ENCODE measurements at regions of chr15 and their contacts with region 1.

Region 1: DNA sequence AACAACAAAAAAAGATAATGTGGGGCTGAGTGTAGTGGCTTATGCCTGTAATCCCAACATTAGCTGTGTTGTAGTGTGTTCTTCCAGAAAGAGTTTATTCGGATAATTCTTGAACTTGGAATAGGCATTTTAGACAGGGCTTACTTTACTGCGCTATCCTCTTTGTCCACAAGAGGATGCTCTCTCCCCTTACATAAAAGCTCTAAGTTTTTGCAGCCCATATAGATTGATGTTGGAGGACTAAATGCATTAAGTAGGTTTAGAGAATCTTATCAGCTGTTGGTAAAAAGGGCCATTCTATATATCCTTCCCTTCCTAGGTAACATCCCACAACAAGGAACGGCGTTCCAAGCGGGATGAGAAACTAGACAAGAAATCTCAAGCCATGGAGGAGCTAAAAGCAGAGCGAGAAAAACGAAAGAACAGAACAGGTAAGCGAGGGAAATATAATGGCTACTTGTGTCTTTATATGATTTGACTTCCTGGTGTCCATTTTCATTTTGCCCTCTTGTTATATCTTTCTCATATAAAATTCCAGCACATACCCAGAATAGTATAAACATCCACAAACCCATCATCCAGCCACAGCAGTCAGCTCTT is 27.8 kb upstream of the ITPKA start:
- DNase-seq: peak; percentile 74
- ATAC-seq: peak; percentile 91
- H3K4me3 ChIP-seq: no peak overlapping the region
- H3K27ac ChIP-seq: no peak overlapping the region
- H3K4me1 ChIP-seq: peaks cover 4% of the 10 kb centered on the region
- H3K27me3 ChIP-seq: no peaks in the 10 kb centered on the region
- CTCF ChIP-seq: peak; percentile 97
- POLR2A ChIP-seq: 0 out of 2 replicates have a peak, but pooled peaks have one; percentile 25
- RAD21 ChIP-seq: peak; percentile 91

Region 2: DNA sequence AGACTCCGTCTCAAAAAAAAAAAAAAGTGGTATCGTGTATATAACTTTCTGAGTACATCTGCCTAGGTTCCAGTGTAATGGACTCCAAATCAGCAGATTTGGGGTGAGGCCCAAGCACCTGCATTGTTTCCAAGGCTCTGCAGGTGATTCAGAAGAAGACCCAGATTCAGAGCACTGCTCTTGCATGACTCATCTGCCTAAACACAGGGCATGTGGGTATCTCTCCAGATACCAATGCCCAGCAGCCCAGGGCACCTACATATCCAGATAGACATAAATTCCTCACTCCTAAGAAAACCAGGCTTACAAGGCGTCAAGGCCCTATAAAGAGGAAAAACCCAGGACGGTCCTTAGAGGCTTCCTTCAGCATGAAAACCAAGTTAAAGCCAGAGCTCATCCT is 87.9 kb before region 1 on chr15:
- CTCF ChIA-PET with region 1: no interaction called
- POLR2A ChIA-PET with region 1: no interaction called
- dilution Hi-C with region 1: no loop called
- in situ Hi-C with region 1: no loop called
- intact Hi-C with region 1: no loop called
- DNase-seq: no peak
- ATAC-seq: no peak
- H3K4me3 ChIP-seq: no peak overlapping the region
- H3K27ac ChIP-seq: no peak overlapping the region
- H3K4me1 ChIP-seq: no peaks in the 10 kb centered on the region
- H3K27me3 ChIP-seq: no peaks in the 10 kb centered on the region
- CTCF ChIP-seq: no peak
- POLR2A ChIP-seq: no peak
- RAD21 ChIP-seq: no peak

Region 3: GRCh38 chr15:41544650-41545015 is 78.7 kb after region 1 on chr15:
- CTCF ChIA-PET with region 1: no interaction called
- POLR2A ChIA-PET with region 1: no interaction called
- dilution Hi-C with region 1: no loop called
- in situ Hi-C with region 1: no loop called
- intact Hi-C with region 1: loop called (anchors 5 kb)
- DNase-seq: no peak
- ATAC-seq: no peak
- H3K4me3 ChIP-seq: no peak overlapping the region
- H3K27ac ChIP-seq: no peak overlapping the region
- H3K4me1 ChIP-seq: no peaks in the 10 kb centered on the region; the same call in none of the 2 replicates
- H3K27me3 ChIP-seq: no peaks in the 10 kb centered on the region
- CTCF ChIP-seq: no peak
- POLR2A ChIP-seq: no peak
- RAD21 ChIP-seq: no peak

Region 4: GRCh38 chr15:41585127-41586047 is 119.5 kb after region 1 on chr15:
- CTCF ChIA-PET with region 1: interaction called, 5 read pairs
- POLR2A ChIA-PET with region 1: no interaction called
- dilution Hi-C with region 1: no loop called
- in situ Hi-C with region 1: no loop called
- intact Hi-C with region 1: loop called (anchors 5 kb)
- DNase-seq: peak; percentile 44
- ATAC-seq: peak; percentile 90
- H3K4me3 ChIP-seq: peak overlapping the region; percentile 23
- H3K27ac ChIP-seq: 0 out of 2 replicates have a peak overlapping the region, but pooled peaks have one; percentile 4
- H3K4me1 ChIP-seq: peaks cover 4% of the 10 kb centered on the region; the same call in 1 of the 2 replicates
- H3K27me3 ChIP-seq: peaks cover under 1% of the 10 kb centered on the region; the same call in 1 of the 2 replicates
- CTCF ChIP-seq: no peak; the same call in 1 of the 2 replicates
- POLR2A ChIP-seq: no peak
- RAD21 ChIP-seq: peak; percentile 22; the same call in 1 of the 2 replicates

Region 5: DNA sequence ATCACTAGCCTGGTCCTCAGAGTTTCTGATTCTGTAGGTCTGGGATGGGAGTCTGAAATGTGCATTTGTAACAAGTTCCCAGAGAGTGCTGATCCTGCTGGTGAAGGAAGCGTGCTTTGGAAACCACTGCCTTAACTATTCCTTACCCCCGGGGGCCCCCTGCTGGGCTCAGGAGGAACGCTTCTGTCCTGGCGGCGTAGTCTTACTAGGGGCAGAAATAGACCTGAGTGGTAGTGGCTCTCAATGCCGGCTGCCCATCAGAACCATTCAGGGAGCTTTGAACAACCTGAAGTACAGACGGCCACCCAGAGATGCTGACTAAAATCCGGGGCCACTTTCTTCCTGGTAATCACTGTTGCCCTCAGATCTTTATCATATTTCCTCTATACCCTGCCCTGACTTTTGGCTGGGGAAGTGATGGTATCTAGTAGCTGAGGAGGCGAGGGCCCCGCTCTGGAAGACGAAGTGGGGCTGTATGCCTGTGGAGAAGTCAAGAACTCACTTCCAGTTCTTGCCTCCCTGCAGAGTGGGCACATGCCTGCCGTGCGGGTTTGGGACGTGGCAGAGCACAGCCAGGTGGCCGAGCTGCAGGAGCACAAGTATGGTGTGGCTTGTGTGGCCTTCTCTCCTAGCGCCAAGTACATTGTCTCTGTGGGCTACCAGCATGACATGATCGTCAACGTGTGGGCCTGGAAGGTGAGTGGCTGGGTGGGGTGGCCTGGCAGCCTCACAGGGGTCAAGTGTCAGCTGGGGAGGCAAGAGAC is 345.7 kb after region 1 on chr15:
- CTCF ChIA-PET with region 1: no interaction called
- POLR2A ChIA-PET with region 1: no interaction called
- dilution Hi-C with region 1: no loop called
- in situ Hi-C with region 1: no loop called
- intact Hi-C with region 1: loop called (anchors 10 kb)
- DNase-seq: peak; percentile 81
- ATAC-seq: peak; percentile 100
- H3K4me3 ChIP-seq: no peak overlapping the region
- H3K27ac ChIP-seq: no peak overlapping the region
- H3K4me1 ChIP-seq: peaks cover 3% of the 10 kb centered on the region
- H3K27me3 ChIP-seq: no peaks in the 10 kb centered on the region
- CTCF ChIP-seq: peak; percentile 97
- POLR2A ChIP-seq: peak; percentile 62
- RAD21 ChIP-seq: peak; percentile 99

Measured in IMR-90 (cell line).